Activated T-helper 1 cell treated with anti-CD3 and anti-CD28 coated beads, Interleukin-12 subunit alpha, Interleukin-12 subunit beta, Interleukin-2, Interleukin-4 antibody, amounts not matched to agents 30 ng/mL and 10 ng/mL and 1 ng/mL, durations not matched to agents 14 hours and 24 hours and 36 hours (primary cell): ENCODE measurements at regions of chr12 and their contacts with region 1.

Region 1: DNA sequence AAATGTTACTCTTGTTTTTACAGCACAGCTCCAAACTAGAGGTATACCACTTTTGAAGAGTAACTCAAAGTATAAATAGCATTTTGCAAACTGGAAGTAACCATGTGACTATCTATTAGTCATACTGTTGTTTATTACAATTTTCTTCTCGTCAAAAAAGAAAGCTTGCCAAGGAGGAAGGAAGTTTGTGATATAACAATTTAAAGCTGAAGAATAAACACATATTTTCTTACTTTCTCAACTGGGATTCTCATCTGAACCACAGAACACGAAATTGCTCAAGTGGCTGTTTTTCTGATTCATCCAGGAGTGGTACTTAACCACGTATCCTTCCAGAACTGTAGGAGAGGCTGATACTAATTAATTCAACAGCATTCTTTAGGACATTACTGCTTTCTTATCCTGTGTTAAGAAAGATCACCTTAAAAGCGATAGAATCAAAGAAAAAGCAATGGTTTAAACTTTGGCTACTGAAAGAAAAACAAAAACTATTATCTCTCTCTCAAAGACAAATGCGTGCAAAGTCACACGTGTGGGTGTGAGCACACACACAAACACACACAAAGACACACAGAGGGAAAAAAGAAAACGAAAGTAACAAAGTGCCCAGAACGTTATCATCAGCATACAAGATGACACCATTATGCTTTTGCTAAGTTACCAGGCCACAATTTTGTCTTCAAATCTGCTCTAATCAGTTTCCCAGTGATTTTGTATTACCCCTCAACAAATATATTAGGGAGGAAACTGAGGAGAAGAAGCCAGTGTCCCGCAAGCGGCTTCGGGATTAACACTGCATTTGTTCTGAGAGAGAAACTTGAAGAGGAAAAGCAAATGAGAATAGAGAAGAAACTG is at the start of gene CLEC2B:
- DNase-seq: peak; percentile 17
- H3K4me3 Mint-ChIP-seq: peak within 1 kb of the TSS; percentile 93
- H3K27ac Mint-ChIP-seq: peak within 1 kb of the TSS; percentile 97
- H3K4me1 Mint-ChIP-seq: peaks cover 45% of the 10 kb centered on the region
- H3K27me3 Mint-ChIP-seq: no peaks in the 10 kb centered on the region
- total RNA-seq, gene CLEC2B: 13.1 and 14.3 TPM in 2 replicates

Region 2: DNA sequence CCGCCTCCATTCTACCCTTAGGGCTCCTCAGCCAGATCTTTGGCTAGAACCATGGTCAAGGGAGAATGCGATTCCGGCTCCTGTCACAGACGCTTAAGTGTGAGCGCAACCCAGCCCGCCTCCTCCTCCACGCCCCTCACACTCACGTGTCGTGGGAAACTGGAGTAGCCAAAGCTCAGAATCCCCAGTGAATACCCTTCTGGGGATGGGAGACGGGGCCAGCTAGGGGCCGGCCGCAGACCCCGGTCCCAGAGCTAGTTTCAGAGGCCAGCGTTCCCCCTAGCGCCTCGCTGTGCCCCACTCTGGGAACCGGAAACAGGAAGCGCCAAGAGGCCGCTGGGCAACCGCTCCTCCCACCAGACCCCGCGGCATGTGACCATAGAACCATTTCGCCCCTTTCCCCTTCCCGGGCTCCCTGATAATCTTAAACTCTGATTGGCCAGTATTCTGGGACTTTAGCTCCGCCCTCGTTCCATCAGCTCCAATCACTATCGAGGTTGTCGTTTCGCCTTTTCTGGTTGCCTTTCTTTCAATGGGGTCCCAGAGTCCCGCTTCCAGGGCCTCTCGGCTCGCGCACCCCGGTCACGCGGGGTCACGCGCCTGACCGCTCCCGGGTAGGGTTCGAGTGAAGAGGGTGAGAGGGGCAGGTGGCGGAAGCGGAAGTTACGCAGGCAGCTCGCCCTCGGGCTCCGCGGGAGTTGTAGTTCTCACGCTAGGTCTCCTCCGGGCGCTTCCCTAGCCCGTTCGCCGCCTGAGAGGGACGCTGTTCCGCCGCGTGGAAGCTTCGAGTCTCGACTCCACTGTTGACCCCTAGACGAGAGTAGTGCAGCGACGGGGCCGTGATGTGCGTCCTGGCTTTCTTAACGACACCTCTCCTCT is 920.0 kb before region 1 on chr12 and contains the start of gene M6PR:
- intact Hi-C with region 1: loop called (anchors 5 kb)
- DNase-seq: peak; percentile 86
- H3K4me3 Mint-ChIP-seq: peak within 1 kb of the TSS; percentile 100
- H3K27ac Mint-ChIP-seq: peak within 1 kb of the TSS; percentile 92
- H3K4me1 Mint-ChIP-seq: peaks cover 72% of the 10 kb centered on the region
- H3K27me3 Mint-ChIP-seq: no peaks in the 10 kb centered on the region
- total RNA-seq, gene M6PR: 179 and 192 TPM in 2 replicates

Region 3: DNA sequence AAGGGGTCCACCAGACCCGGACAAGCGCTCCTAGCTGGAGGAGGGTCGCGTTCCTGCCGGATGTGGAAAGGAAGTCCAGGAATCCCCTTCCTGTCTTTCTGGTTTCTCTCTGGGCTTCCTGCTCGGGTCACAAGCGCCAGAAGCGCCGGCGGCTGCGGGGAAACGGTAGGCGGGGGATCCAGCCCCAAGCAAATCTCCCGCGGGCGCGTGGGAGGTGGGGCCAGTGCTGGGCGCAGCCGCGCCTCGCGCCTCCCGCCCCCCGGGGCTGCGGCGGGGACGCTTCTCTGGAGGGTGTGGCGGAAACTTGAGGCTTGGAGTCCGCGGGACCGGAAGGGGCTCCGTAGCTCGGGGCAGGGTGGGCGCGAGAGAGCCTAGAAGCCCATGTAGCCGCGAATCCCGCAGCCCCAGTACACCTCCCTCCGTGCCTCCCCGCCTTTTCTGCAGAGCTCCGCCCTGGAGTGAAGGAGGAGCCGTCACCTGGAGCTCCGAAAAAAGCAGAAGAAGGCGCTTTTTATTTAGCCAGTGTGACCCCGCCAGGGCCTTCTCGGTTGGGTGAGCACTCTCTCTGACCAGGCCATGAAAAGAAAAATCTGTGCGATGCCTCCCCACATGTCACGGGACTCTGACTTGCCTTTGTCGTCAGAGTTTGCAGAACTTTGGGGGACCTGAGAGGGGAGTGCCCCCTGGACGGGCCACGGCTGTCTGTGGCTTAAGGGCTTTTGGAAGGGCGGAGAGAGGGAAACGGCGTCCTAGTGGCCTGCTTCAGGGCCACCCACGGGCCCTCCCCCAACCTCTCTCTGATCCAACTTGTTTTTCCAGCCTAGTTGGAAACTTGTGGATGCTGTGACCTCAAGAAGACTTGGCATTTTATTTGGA is 221.5 kb before region 1 on chr12:
- intact Hi-C with region 1: loop called (anchors 1 kb)
- DNase-seq: peak; percentile 93
- H3K4me3 Mint-ChIP-seq: peak overlapping the region; percentile 93
- H3K27ac Mint-ChIP-seq: peak overlapping the region; percentile 97
- H3K4me1 Mint-ChIP-seq: peaks cover 75% of the 10 kb centered on the region
- H3K27me3 Mint-ChIP-seq: peaks cover 3% of the 10 kb centered on the region

Region 4: DNA sequence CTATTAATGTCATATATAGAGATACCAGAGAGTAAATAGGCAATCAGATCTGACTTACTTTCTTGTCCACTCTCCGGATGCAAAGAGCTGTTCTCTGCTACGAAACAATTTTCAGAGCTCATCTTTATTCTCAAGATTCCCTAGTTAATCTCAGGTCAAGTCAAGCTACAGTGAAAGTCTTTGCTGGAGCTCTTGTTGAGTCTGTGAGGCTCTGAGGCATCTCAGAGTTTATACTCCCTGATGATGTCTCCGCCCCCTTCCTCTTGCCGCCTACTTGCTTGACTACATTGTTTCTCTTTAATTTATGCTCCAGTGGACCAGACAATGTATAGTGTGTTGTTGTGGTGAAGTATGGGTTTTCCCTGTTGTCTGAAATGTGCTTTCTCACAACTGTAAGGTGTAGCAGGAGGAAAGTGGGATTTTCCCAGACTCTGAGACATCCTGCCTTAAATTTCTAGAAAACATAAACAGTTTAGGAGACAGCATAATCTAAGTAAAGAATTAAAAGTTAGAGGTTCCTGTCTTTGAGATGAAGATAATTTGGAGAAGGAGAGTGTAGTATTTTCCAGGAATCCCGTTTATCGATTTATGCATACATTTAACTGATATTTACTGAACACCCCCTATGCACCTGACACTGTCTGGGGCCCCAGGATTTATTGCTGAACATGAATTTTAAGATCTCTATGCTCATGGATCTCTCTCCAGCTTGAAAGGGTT is 108.7 kb before region 1 on chr12 and contains the start of gene CD69:
- intact Hi-C with region 1: loop called (anchors 1 kb)
- DNase-seq: peak; percentile 81
- H3K4me3 Mint-ChIP-seq: peak within 1 kb of the TSS; percentile 98
- H3K27ac Mint-ChIP-seq: peak within 1 kb of the TSS; percentile 97
- H3K4me1 Mint-ChIP-seq: peaks cover 68% of the 10 kb centered on the region
- H3K27me3 Mint-ChIP-seq: peaks cover 6% of the 10 kb centered on the region
- total RNA-seq, gene CD69: 90.5 and 93.2 TPM in 2 replicates

Region 5: DNA sequence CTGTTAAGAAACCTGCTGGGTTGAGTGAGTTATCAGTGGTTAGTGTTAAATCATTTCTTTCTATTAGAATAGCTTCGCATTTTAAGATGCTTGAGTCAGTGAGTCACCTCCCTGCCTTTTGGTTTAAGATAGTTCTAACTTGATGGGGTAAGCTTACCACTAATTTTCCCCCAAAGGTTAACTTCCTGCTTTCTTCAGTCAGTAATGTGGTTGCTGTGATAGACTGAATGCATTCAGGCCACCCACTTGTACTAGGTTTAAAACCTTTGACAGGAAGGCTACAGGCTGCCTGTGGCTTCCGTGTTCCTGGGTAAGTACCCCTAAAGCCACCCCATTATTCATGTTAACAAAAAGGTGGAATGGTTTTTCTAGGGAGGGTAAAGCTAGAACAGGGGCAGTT is 37.3 kb after region 1 on chr12:
- intact Hi-C with region 1: loop called (anchors 2 kb)
- DNase-seq: peak; percentile 23
- H3K4me3 Mint-ChIP-seq: peak overlapping the region; percentile 28
- H3K27ac Mint-ChIP-seq: peak overlapping the region; percentile 69
- H3K4me1 Mint-ChIP-seq: peaks cover 23% of the 10 kb centered on the region
- H3K27me3 Mint-ChIP-seq: peaks cover 2% of the 10 kb centered on the region

Region 6: GRCh38 chr12:10212201-10213131 is 342.9 kb after region 1 on chr12 and contains the start of gene GABARAPL1:
- intact Hi-C with region 1: loop called (anchors 1 kb)
- DNase-seq: peak; percentile 76
- H3K4me3 Mint-ChIP-seq: peak within 1 kb of the TSS; percentile 84
- H3K27ac Mint-ChIP-seq: peak within 1 kb of the TSS; percentile 93
- H3K4me1 Mint-ChIP-seq: peaks cover 32% of the 10 kb centered on the region
- H3K27me3 Mint-ChIP-seq: peaks cover 23% of the 10 kb centered on the region
- total RNA-seq, gene GABARAPL1: 5.0 and 6.6 TPM in 2 replicates